GM12878 (cell line): ENCODE measurements at regions of chr22 and their contacts with region 1.

Region 1: GRCh38 chr22:41697126-41697775 is 2.1 kb upstream of the MEI1 start:
- DNase-seq: peak; percentile 57
- ATAC-seq: peak; percentile 94
- H3K4me3 ChIP-seq: no peak overlapping the region
- H3K27ac ChIP-seq: peak overlapping the region; percentile 48; the same call in 1 of the 2 replicates
- H3K4me1 ChIP-seq: peaks cover 19% of the 10 kb centered on the region
- H3K27me3 ChIP-seq: no peaks in the 10 kb centered on the region
- CTCF ChIP-seq: peak; percentile 97 to 98 (median 98); a peak in 5 of 6 replicates
- EP300 ChIP-seq: no peak
- POLR2A ChIP-seq: no peak
- RAD21 ChIP-seq: peak; percentile 94

Region 2: GRCh38 chr22:41181349-41182241 is 515.7 kb before region 1 on chr22:
- CTCF ChIA-PET with region 1: no interaction called
- POLR2A ChIA-PET with region 1: no interaction called
- RAD21 ChIA-PET with region 1: no interaction called
- SMC1A ChIA-PET with region 1: no interaction called
- in situ Hi-C with region 1: no loop called
- intact Hi-C with region 1: no loop called
- DNase-seq: no peak
- ATAC-seq: no peak; the same call in 2 of the 3 replicates
- H3K4me3 ChIP-seq: no peak overlapping the region
- H3K27ac ChIP-seq: no peak overlapping the region
- H3K4me1 ChIP-seq: no peaks in the 10 kb centered on the region
- H3K27me3 ChIP-seq: no peaks in the 10 kb centered on the region
- CTCF ChIP-seq: no peak
- EP300 ChIP-seq: no peak
- POLR2A ChIP-seq: no peak; the same call in 1 of the 2 replicates
- RAD21 ChIP-seq: no peak

Region 3: GRCh38 chr22:41666661-41667258 is 30.5 kb before region 1 on chr22:
- CTCF ChIA-PET with region 1: interaction called, 30 read pairs
- POLR2A ChIA-PET with region 1: interaction called, 5 read pairs
- RAD21 ChIA-PET with region 1: interaction called, 12 read pairs
- SMC1A ChIA-PET with region 1: interaction called, 8 read pairs
- in situ Hi-C with region 1: no loop called
- intact Hi-C with region 1: no loop called
- DNase-seq: peak; percentile 72
- ATAC-seq: peak; percentile 96
- H3K4me3 ChIP-seq: peak overlapping the region; percentile 14; the same call in 1 of the 2 replicates
- H3K27ac ChIP-seq: peak overlapping the region; percentile 76
- H3K4me1 ChIP-seq: peaks cover 3% of the 10 kb centered on the region; the same call in 1 of the 2 replicates
- H3K27me3 ChIP-seq: no peaks in the 10 kb centered on the region
- CTCF ChIP-seq: peak; percentile 98 to 100 (median 100); a peak in 5 of 6 replicates
- EP300 ChIP-seq: no peak
- POLR2A ChIP-seq: peak; percentile 94
- RAD21 ChIP-seq: peak; percentile 66

Region 4: GRCh38 chr22:41746567-41747400 is 49.5 kb after region 1 on chr22:
- CTCF ChIA-PET with region 1: interaction called, 71 read pairs
- POLR2A ChIA-PET with region 1: interaction called, 10 read pairs
- RAD21 ChIA-PET with region 1: interaction called, 33 read pairs
- SMC1A ChIA-PET with region 1: interaction called, 42 read pairs
- in situ Hi-C with region 1: no loop called
- intact Hi-C with region 1: loop called (anchors 5 kb)
- DNase-seq: peak; percentile 80
- ATAC-seq: peak; percentile 94
- H3K4me3 ChIP-seq: peak overlapping the region; percentile 34; the same call in 1 of the 2 replicates
- H3K27ac ChIP-seq: peak overlapping the region; percentile 69
- H3K4me1 ChIP-seq: peaks cover 42% of the 10 kb centered on the region
- H3K27me3 ChIP-seq: no peaks in the 10 kb centered on the region
- CTCF ChIP-seq: peak; percentile 75 to 81 (median 77)
- EP300 ChIP-seq: peak; percentile 65 to 85
- POLR2A ChIP-seq: no peak
- RAD21 ChIP-seq: peak; percentile 71

Region 5: GRCh38 chr22:41768430-41768829 is 71.2 kb after region 1 on chr22:
- CTCF ChIA-PET with region 1: interaction called, 69 read pairs
- POLR2A ChIA-PET with region 1: interaction called, 3 read pairs
- RAD21 ChIA-PET with region 1: interaction called, 36 read pairs
- SMC1A ChIA-PET with region 1: interaction called, 21 read pairs
- in situ Hi-C with region 1: no loop called
- intact Hi-C with region 1: no loop called
- DNase-seq: no peak
- ATAC-seq: peak; percentile 59
- H3K4me3 ChIP-seq: no peak overlapping the region
- H3K27ac ChIP-seq: no peak overlapping the region
- H3K4me1 ChIP-seq: no peaks in the 10 kb centered on the region
- H3K27me3 ChIP-seq: no peaks in the 10 kb centered on the region
- CTCF ChIP-seq: no peak
- EP300 ChIP-seq: no peak
- POLR2A ChIP-seq: no peak
- RAD21 ChIP-seq: no peak

Region 6: DNA sequence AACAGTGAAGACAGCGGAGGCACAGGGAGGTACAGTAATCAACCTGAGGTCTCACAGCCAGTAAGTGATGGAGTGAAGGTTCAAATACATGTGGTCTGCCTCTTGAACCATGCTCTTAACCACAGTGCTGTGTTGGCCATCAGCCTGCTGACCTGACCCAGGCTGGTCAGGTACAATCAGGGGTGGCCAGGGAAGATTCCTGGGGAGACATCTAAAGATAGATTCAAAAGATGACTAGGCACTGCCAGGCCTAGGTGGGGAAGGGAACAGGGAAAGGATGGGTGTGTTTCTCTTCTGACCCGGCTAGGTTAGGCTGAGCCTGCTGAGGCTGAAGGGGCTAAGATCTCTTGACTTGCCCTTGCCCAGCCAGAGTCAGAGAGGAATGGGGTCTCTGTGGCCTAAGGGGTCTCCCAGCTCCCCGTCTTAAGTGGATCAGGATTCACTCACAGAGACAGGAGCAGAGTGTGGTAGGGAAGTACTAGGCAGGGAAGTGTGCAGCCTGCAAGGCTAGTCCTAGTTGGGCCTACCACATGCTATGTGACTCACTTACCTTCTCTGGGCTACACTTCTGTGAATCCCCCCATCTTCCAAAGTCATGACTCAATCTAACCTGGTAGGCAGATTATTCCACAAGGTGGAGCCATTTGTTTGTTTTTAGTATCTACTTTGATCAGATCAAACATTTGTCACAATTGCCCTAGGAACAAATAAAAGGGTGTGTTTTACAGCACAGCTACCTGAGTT is 125.2 kb after region 1 on chr22:
- CTCF ChIA-PET with region 1: interaction called, 22 read pairs
- POLR2A ChIA-PET with region 1: no interaction called
- RAD21 ChIA-PET with region 1: interaction called, 4 read pairs
- SMC1A ChIA-PET with region 1: interaction called, 10 read pairs
- in situ Hi-C with region 1: no loop called
- intact Hi-C with region 1: no loop called
- DNase-seq: peak; percentile 47
- ATAC-seq: peak; percentile 92
- H3K4me3 ChIP-seq: no peak overlapping the region
- H3K27ac ChIP-seq: no peak overlapping the region
- H3K4me1 ChIP-seq: no peaks in the 10 kb centered on the region; the same call in 1 of the 2 replicates
- H3K27me3 ChIP-seq: no peaks in the 10 kb centered on the region
- CTCF ChIP-seq: peak; percentile 55 to 67 (median 59); a peak in 5 of 6 replicates
- EP300 ChIP-seq: no peak
- POLR2A ChIP-seq: no peak
- RAD21 ChIP-seq: peak; percentile 82

Region 7: DNA sequence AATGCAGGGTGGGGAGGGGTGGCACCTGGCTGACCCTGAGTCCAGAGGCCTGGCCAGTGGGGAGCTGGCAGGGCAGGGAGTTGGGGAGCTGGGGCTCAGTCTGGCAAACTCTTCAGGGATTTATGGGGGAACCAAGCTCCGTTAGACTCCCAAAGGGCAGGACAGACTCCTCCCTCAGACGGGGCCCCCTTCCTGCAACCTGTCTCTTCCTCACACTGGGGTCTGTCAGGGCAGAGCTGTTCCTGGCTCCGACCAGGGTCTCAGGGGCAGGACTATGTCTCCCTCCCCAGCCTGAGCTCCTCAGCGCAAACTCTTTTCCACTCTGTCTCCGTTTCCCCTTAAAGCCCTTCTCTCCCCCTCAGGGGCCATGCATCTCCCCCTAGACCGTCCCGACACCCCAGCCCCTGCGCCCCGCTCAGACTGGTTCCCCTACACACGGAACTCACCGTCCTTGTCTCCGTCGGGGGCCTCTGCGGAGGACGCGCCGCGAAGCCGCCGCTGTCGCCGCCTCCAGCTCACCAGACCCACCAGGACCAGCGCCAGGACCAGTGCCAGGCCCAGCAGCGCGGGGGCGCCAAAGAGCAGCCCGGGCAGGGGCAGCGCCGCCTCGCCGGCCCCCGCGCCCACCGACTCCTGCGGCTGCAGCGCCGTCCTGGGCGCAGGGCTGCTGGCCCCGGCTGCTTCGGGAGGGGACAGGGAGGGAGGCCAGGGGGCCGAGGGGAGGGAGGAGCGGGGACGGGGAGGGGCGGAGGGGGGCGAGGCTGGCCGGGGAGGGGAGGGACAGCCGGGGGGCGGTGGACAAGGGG is 228.6 kb after region 1 on chr22:
- CTCF ChIA-PET with region 1: interaction called, 11 read pairs
- POLR2A ChIA-PET with region 1: interaction called, 4 read pairs
- RAD21 ChIA-PET with region 1: interaction called, 26 read pairs
- SMC1A ChIA-PET with region 1: interaction called, 5 read pairs
- in situ Hi-C with region 1: no loop called
- intact Hi-C with region 1: no loop called
- DNase-seq: no peak
- ATAC-seq: peak; percentile 59
- H3K4me3 ChIP-seq: peak overlapping the region; percentile 97
- H3K27ac ChIP-seq: peak overlapping the region; percentile 93
- H3K4me1 ChIP-seq: peaks cover 53% of the 10 kb centered on the region
- H3K27me3 ChIP-seq: no peaks in the 10 kb centered on the region
- CTCF ChIP-seq: peak; percentile 78 to 87 (median 79)
- EP300 ChIP-seq: no peak
- POLR2A ChIP-seq: peak; percentile 54; the same call in 1 of the 2 replicates
- RAD21 ChIP-seq: peak; percentile 50